ENCODE measurements at regions of chr2 and their contacts with region 1.

Region 1: GRCh38 chr2:197453161-197453914 is at the start of gene COQ10B:
- DNase-seq: peak; percentile 94 to 100 (median 97)
- ATAC-seq: peak; percentile 85
- H3K4me3 ChIP-seq: peak within 1 kb of the TSS; percentile 67
- H3K4me3 Mint-ChIP-seq: peak within 1 kb of the TSS; percentile 99
- H3K27ac ChIP-seq: peak within 1 kb of the TSS; percentile 98 to 100
- H3K27ac Mint-ChIP-seq: peak within 1 kb of the TSS; percentile 100
- H3K4me1 ChIP-seq: peaks cover 29% of the 10 kb centered on the region
- H3K4me1 Mint-ChIP-seq: peaks cover 52% of the 10 kb centered on the region
- H3K27me3 ChIP-seq: no peaks in the 10 kb centered on the region
- H3K27me3 Mint-ChIP-seq: no peaks in the 10 kb centered on the region
- CTCF ChIP-seq: peak; percentile 47
- total RNA-seq, gene COQ10B: 53.4 to 55.3 TPM

Region 2: DNA sequence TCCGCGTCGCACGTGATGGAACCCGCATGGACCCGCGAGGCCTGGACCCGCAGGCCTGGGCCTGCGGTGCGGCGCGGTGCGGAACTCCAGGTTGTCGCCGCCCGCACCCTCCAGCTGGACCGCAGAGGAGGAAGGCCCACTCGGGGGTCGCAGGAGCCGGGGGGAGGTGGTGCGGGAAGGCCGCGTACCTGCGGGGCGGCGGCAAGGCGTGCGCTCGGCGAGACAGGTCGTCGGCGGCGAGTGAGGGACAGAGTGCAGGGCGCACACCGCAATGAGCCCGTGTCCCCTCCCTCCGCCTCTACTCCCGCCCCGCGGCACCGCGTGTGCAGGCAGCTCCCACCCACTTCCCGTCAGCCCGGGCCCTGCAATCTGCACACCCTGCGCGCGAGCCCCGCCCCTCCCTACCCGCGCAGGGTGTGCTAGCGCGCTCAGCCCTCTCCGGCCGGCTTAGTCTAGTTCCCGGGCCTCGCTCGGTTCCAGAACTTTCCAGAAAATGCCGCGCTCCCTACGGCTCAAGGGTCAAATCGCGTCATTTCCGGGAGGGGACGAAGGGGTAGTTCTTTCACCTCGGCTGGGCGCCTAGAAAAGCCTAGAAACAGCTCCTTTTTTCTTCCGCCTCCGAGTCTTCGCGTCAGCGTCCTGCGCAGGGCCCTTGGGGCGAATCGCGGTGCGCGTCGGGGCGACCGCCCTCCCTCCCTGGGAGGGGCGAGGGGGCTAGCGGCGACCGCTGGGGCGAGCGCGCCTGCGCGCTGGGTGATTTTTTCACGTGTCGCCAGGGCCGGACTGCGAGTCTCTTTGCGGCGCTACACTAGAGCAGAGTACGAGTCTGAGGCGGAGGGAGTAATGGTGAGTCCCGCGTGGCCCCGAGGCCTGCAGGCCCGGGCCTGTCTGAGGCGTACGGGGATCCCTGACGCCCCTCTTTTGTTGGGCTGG is 46.5 kb after region 1 on chr2 and contains the starts of genes HSPD1 and HSPE1:
- CTCF ChIA-PET with region 1: interaction called, 6 read pairs
- POLR2A ChIA-PET with region 1: interaction called, 111 read pairs
- intact Hi-C with region 1: loop called (anchors 1 to 2 kb)
- DNase-seq: peak; percentile 91 to 99 (median 95)
- ATAC-seq: peak; percentile 85
- H3K4me3 ChIP-seq: peak within 1 kb of the TSS; percentile 95
- H3K4me3 Mint-ChIP-seq: peak within 1 kb of the TSS; percentile 94
- H3K27ac ChIP-seq: peak within 1 kb of the TSS; percentile 93 to 97
- H3K27ac Mint-ChIP-seq: peak within 1 kb of the TSS; percentile 87
- H3K4me1 ChIP-seq: peaks cover 41% of the 10 kb centered on the region
- H3K4me1 Mint-ChIP-seq: peaks cover 69% of the 10 kb centered on the region
- H3K27me3 ChIP-seq: no peaks in the 10 kb centered on the region
- H3K27me3 Mint-ChIP-seq: no peaks in the 10 kb centered on the region
- CTCF ChIP-seq: no peak
- total RNA-seq, gene HSPD1: 154 to 157 TPM
- total RNA-seq, gene HSPE1: 50.8 to 56.2 TPM